B cell (primary cell): ENCODE measurements at regions of chr10 and their contacts with region 1.

Region 1: DNA sequence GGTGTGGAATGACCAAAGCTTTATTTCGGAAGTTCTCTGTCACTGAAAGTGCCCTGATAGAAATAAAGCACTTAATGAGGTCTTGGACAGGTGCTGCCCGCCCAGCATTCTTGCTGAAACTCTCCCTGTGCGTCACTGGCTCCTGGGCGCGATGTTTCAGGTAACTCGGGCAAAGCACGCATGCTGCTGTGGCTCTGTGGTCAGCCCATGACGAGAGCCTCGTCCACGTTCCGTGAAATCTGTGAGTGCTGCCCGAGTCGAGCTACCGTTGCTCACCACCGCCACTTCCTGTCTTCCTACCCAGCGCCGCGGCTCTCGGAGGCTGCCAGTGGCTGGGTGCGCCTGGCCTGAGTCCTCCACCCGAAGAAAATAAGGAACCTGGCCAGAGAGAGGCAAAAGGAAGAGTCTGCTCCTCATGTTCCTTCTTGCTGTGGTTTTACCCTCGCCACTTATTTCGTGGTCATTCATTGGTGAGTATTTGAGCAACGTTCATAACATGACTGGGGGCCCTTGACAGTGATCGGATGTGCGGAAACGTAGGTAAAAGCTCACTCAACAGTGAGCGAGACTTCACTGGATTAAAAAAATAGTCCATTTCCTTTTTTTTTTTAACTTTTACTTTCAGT is 95.5 kb downstream of the MAP3K8 start:
- DNase-seq: peak; percentile 95
- ATAC-seq: peak; percentile 83
- H3K4me3 ChIP-seq: peak overlapping the region; percentile 44 to 63 (median 59)
- H3K4me3 Mint-ChIP-seq: peak overlapping the region; percentile 91
- H3K27ac ChIP-seq: peak overlapping the region; percentile 93 to 94
- H3K27ac Mint-ChIP-seq: peak overlapping the region; percentile 99
- H3K4me1 ChIP-seq: peaks cover 71 to 80% of the 10 kb centered on the region in 2 donors
- H3K4me1 Mint-ChIP-seq: peaks cover 69% of the 10 kb centered on the region
- H3K27me3 ChIP-seq: no peaks in the 10 kb centered on the region
- H3K27me3 Mint-ChIP-seq: no peaks in the 10 kb centered on the region
- CTCF ChIP-seq: no peak

Region 2: DNA sequence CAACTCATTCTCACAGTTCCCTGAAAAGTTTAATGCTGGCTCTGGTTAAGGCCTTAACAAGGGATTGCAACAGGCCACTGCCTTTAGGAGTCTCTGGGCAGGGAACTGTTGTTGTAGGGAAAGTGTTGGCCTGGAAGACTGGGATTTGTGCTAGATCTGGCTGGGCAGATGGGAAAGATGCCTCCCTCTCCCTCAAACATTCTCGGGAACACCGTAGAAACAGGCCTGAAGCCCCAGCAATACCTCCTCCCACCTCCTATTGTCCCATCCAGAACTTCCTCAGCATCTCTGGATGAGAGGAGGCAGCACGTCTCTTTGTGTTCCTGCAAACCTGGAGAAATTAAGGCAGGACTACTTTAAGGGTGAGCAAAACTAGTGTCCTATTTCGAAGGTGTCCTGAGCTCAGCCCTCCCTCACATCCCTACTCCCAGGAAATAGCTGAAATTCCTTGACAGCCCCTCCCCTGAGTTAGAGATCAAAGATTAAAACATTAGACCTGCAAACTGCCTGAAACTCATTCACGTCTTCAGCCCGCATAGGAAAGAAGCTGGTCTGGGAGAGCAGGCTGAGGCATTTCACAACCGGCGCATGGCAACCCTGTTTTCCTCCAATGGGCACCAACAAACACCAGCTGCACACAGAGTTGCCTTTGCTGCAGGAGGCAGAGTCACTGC is 106.4 kb before region 1 on chr10:
- CTCF ChIA-PET with region 1: interaction called, 13 read pairs
- POLR2A ChIA-PET with region 1: no interaction called
- intact Hi-C with region 1: no loop called
- DNase-seq: peak; percentile 52
- ATAC-seq: peak; percentile 23
- H3K4me3 ChIP-seq: peak overlapping the region in 1 of 5 experiments; percentile 26
- H3K4me3 Mint-ChIP-seq: peak overlapping the region; percentile 73
- H3K27ac ChIP-seq: peak overlapping the region; percentile 40 to 60
- H3K27ac Mint-ChIP-seq: peak overlapping the region; percentile 86
- H3K4me1 ChIP-seq: peaks cover 57 to 70% of the 10 kb centered on the region in 2 donors
- H3K4me1 Mint-ChIP-seq: peaks cover 65% of the 10 kb centered on the region
- H3K27me3 ChIP-seq: no peaks in the 10 kb centered on the region
- H3K27me3 Mint-ChIP-seq: no peaks in the 10 kb centered on the region
- CTCF ChIP-seq: no peak

Region 3: DNA sequence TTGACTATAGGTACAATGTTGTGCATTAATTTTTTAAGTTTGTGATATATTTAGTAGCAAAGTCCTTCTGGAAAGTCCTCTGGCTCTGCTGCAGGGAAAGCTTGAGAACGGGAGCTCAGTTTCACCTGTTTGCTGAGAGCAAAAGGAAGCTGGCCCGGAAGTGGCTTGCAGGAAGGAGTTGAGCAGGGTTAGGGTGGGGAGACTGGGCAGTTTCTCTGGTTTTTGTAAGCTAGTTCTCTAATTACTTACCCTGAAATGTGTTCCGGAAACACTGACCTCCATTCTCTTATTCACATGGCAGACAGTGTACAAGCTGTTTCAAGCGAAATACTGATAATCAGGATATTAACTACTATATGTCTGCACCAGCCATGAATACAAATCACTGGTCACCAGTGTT is 73.2 kb before region 1 on chr10:
- CTCF ChIA-PET with region 1: interaction called, 26 read pairs
- POLR2A ChIA-PET with region 1: interaction called, 3 read pairs
- intact Hi-C with region 1: loop called (anchors 5 kb)
- DNase-seq: peak; percentile 60
- ATAC-seq: peak; percentile 70
- H3K4me3 ChIP-seq: peak overlapping the region in 4 of 5 experiments; percentile 7 to 43 (median 26)
- H3K4me3 Mint-ChIP-seq: peak overlapping the region; percentile 42
- H3K27ac ChIP-seq: peak overlapping the region; percentile 58 to 65
- H3K27ac Mint-ChIP-seq: peak overlapping the region; percentile 86
- H3K4me1 ChIP-seq: peaks cover 43 to 48% of the 10 kb centered on the region in 2 donors
- H3K4me1 Mint-ChIP-seq: peaks cover 41% of the 10 kb centered on the region
- H3K27me3 ChIP-seq: no peaks in the 10 kb centered on the region
- H3K27me3 Mint-ChIP-seq: no peaks in the 10 kb centered on the region
- CTCF ChIP-seq: no peak

Region 4: DNA sequence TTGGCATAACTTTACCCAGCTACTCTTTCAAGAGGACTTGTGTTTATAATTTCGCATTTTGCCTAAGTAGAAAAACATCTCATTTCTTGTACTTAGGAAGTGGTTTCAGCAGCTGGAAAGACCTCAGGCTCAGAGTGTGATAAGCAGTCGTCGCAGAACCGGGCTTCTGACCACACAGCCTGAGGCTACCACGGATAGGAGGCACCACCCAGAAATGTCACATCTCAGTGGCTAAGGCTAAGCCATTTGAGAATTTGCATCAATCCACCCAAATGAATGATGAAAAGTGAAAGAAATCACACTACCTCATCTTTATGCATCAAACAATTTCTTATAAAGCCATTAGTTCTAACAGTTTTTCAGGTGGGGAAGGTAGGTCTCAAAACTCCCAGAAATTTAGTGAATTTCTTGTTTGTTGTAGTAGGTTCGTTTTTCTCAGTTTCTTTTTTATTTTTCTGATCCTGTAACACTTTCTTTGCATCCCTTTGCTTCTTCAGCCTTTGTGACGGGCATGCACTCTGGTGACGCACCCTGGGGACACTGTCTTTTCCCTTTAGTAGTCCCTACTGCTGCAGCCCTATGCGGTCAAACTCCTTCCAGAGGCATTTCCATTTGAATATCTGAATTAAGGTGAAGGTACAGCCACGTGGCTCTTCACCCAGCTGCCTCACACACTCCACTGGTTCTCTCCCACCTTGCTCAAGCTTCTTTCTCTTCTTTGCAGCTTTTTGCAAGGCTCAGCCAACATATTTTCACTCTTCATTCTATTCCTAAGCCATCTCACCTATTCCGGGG is 27.0 kb before region 1 on chr10:
- CTCF ChIA-PET with region 1: interaction called, 6 read pairs
- POLR2A ChIA-PET with region 1: interaction called, 6 read pairs
- intact Hi-C with region 1: loop called (anchors 2 kb)
- DNase-seq: peak; percentile 77
- ATAC-seq: peak; percentile 90
- H3K4me3 ChIP-seq: peak overlapping the region; percentile 5 to 51 (median 29)
- H3K4me3 Mint-ChIP-seq: peak overlapping the region; percentile 80
- H3K27ac ChIP-seq: peak overlapping the region; percentile 84 to 88
- H3K27ac Mint-ChIP-seq: peak overlapping the region; percentile 89
- H3K4me1 ChIP-seq: peaks cover 83 to 84% of the 10 kb centered on the region in 2 donors
- H3K4me1 Mint-ChIP-seq: peaks cover 84% of the 10 kb centered on the region
- H3K27me3 ChIP-seq: no peaks in the 10 kb centered on the region
- H3K27me3 Mint-ChIP-seq: no peaks in the 10 kb centered on the region
- CTCF ChIP-seq: no peak

Region 5: GRCh38 chr10:30675791-30676718 is 146.6 kb after region 1 on chr10:
- CTCF ChIA-PET with region 1: no interaction called
- POLR2A ChIA-PET with region 1: no interaction called
- intact Hi-C with region 1: no loop called
- DNase-seq: no peak
- ATAC-seq: no peak
- H3K4me3 ChIP-seq: no peak overlapping the region
- H3K4me3 Mint-ChIP-seq: no peak overlapping the region
- H3K27ac ChIP-seq: no peak overlapping the region
- H3K27ac Mint-ChIP-seq: no peak overlapping the region
- H3K4me1 ChIP-seq: no peaks in the 10 kb centered on the region
- H3K4me1 Mint-ChIP-seq: no peaks in the 10 kb centered on the region
- H3K27me3 ChIP-seq: peaks cover 0 to 8% (median under 1%) of the 10 kb centered on the region in 4 experiments
- H3K27me3 Mint-ChIP-seq: peaks cover 30% of the 10 kb centered on the region
- CTCF ChIP-seq: no peak